Activated CD4-positive, alpha-beta T cell treated with anti-CD3 and anti-CD28 coated beads, Interleukin-2, amount 10 ng/mL, durations not matched to agents 24 days and 14 days (primary cell): ENCODE measurements at regions of chr16 and their contacts with region 1.

Region 1: DNA sequence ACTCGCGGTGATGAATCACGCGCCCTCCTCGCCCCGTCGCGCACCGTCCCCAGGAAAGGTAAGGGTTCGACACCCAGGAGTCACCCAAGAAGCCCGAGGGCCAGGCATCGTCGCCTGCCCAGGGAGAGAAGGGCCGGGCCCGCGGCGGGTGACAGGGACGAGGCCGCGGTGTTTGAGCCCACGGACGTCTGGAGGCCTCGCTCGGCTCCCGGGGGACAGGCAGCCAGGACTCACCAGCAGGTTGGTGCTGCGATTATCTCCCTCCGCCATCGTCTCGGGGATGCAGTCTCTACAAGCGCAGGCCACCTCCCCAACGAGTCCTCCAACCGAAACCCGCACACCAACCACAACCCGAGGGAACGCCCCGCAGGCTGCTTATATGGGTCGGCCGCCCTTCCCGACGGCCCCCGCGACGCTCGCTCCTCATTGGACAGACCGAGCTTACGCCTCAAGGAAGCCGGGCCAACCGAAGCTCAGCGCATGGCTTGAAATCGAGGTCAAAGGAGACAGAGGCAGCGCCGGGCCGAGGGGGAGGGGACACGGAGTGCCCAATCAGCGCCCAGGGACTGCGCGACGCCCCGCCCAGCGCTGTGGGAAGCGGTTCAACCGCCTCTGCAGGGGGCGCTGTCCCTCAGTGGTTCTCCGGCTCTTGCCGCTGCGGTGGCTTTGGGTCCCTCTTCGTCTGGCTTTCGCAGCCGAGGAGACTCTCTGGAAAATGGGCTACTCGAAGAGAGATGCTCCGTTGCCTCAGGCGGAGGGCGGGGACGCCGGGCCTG is at the start of gene ARL6IP1:
- DNase-seq: peak; percentile 99
- H3K4me3 Mint-ChIP-seq: peak within 1 kb of the TSS; percentile 99
- H3K27ac Mint-ChIP-seq: peak within 1 kb of the TSS; percentile 97
- H3K4me1 Mint-ChIP-seq: peaks cover 59% of the 10 kb centered on the region
- H3K27me3 Mint-ChIP-seq: no peaks in the 10 kb centered on the region
- total RNA-seq, gene ARL6IP1: 97.2 and 98.5 TPM in 2 replicates

Region 2: GRCh38 chr16:18789850-18790724 is 11.3 kb before region 1 on chr16 and contains the start of gene RPS15A:
- intact Hi-C with region 1: loop called (anchors 1 kb)
- DNase-seq: peak; percentile 98
- H3K4me3 Mint-ChIP-seq: peak within 1 kb of the TSS; percentile 99
- H3K27ac Mint-ChIP-seq: peak within 1 kb of the TSS; percentile 97
- H3K4me1 Mint-ChIP-seq: peaks cover 44% of the 10 kb centered on the region
- H3K27me3 Mint-ChIP-seq: peaks cover 2% of the 10 kb centered on the region
- total RNA-seq, gene RPS15A: 1,857 and 1,884 TPM in 2 replicates

Region 3: GRCh38 chr16:18839555-18839954 is 38.2 kb after region 1 on chr16:
- intact Hi-C with region 1: loop called (anchors 5 kb)
- DNase-seq: no peak
- H3K4me3 Mint-ChIP-seq: no peak overlapping the region
- H3K27ac Mint-ChIP-seq: no peak overlapping the region
- H3K4me1 Mint-ChIP-seq: peaks cover 17% of the 10 kb centered on the region
- H3K27me3 Mint-ChIP-seq: no peaks in the 10 kb centered on the region

Region 4: GRCh38 chr16:18969050-18969854 is 167.9 kb after region 1 on chr16:
- intact Hi-C with region 1: loop called (anchors 1 kb)
- DNase-seq: peak; percentile 94
- H3K4me3 Mint-ChIP-seq: peak overlapping the region; percentile 53
- H3K27ac Mint-ChIP-seq: no peak overlapping the region
- H3K4me1 Mint-ChIP-seq: peaks cover 7% of the 10 kb centered on the region
- H3K27me3 Mint-ChIP-seq: peaks cover 2% of the 10 kb centered on the region

Region 5: DNA sequence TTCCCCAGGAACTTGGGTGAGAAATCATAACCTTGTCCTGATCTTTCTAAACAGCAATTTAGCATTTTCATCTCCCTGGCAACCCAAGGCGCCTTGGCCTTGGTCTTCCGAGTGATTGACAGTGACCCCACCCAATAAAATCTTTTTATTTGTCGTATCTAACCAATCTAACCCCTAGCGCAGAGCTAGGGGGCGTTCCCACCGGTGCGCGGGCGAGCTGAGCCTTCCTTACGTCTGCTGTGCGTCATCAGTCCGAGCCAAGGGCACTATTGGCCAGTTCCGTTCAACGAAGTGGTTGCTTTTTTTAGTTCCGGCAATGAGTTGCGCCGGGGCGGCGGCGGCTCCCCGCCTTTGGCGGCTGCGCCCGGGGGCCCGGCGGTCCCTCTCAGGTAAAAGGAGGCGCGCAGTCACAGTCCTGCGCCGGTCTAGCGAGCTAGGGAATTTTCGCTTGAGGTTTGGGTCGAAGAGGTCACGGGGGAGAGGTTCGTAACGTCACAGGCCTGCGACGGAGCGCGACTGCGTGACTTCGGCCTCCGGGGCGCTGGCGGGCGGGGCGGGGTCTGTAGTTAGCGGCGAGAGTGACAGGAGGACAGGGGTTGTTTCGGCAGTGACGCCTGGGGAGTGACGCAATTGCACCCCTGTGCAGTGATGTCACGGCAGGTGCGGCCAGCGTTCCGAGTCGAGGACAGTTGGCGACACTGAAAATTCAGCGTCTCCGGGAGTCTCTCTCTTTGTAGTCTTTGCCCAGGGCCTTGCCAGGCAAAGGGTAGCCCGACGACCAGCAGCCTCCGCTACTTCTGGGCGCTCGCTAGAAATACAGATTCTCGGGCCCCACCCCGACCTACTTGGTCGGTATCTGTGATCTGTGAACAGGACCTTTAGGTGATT is 266.2 kb after region 1 on chr16 and contains the start of gene COQ7:
- intact Hi-C with region 1: loop called (anchors 5 kb)
- DNase-seq: peak; percentile 99
- H3K4me3 Mint-ChIP-seq: peak within 1 kb of the TSS; percentile 92
- H3K27ac Mint-ChIP-seq: peak within 1 kb of the TSS; percentile 97
- H3K4me1 Mint-ChIP-seq: peaks cover 16% of the 10 kb centered on the region
- H3K27me3 Mint-ChIP-seq: peaks cover 3% of the 10 kb centered on the region
- total RNA-seq, gene COQ7: 21.6 and 22.0 TPM in 2 replicates